Colonic mucosa (tissue), 4 donors: ENCODE measurements at regions of chr6 and their contacts with region 1.

Region 1: GRCh38 chr6:89970609-89971337 is 76.5 kb downstream of the GJA10 start:
- DNase-seq: no peak
- H3K4me3 ChIP-seq: no peak overlapping the region
- H3K27ac ChIP-seq: no peak overlapping the region
- H3K4me1 ChIP-seq: no peaks in the 10 kb centered on the region
- H3K27me3 ChIP-seq: no peaks in the 10 kb centered on the region
- CTCF ChIP-seq: peak; percentile 49

Region 2: DNA sequence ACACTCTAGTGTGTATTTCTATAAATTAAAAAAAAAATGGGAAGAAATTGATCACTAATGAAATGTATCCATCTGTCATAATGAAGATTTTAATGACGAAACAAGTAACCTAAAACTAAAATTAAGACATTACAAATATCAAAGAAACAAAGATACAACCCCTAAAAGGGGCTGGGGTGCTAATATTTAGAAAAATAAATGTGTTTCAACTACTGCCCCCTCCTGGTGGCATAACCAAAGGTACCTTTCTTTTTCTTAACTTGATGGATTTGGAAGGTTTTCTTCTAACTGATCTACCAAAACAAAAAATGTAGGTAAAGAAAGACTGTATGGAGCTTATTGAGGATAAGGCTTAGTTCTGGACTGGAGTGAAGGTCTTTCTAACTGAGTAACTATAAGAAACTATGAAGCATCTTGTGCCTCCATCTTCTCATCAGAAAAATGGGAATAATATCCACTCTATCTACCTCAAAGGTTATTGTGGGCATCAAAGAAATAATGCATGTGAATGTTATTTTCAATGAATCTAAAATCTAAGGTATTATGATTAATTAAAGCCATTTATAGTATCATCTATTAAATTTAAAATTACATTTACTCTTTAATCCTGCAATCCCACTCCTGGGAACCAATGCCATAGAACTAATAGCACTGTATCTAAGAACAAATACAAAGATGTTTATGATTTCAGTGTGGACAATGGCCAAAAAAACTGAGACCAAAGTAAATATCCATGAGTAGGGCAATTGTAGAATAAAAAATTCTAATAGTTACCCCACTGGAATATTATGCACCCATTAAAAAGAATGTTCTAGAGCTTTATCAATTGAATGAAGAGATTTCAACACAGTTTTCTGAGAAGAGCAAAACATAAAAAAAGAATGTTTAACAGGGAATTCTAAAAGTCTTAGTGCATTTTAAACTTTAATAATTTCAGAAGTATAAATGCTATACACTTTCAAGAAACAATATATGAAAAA is 208.7 kb after region 1 on chr6:
- intact Hi-C with region 1: loop called (anchors 10 kb)
- DNase-seq: no peak
- H3K4me3 ChIP-seq: no peak overlapping the region
- H3K27ac ChIP-seq: no peak overlapping the region
- H3K4me1 ChIP-seq: peaks cover 6% of the 10 kb centered on the region
- H3K27me3 ChIP-seq: no peaks in the 10 kb centered on the region
- CTCF ChIP-seq: peak; percentile 40

Region 3: GRCh38 chr6:90285611-90286381 is 315.0 kb after region 1 on chr6:
- intact Hi-C with region 1: loop called (anchors 5 kb)
- DNase-seq: peak; percentile 58
- H3K4me3 ChIP-seq: no peak overlapping the region
- H3K27ac ChIP-seq: peak overlapping the region; percentile 10
- H3K4me1 ChIP-seq: no peaks in the 10 kb centered on the region
- H3K27me3 ChIP-seq: no peaks in the 10 kb centered on the region
- CTCF ChIP-seq: no peak